ENCODE measurements at regions of chr11 and their contacts with region 1.

Region 1: DNA sequence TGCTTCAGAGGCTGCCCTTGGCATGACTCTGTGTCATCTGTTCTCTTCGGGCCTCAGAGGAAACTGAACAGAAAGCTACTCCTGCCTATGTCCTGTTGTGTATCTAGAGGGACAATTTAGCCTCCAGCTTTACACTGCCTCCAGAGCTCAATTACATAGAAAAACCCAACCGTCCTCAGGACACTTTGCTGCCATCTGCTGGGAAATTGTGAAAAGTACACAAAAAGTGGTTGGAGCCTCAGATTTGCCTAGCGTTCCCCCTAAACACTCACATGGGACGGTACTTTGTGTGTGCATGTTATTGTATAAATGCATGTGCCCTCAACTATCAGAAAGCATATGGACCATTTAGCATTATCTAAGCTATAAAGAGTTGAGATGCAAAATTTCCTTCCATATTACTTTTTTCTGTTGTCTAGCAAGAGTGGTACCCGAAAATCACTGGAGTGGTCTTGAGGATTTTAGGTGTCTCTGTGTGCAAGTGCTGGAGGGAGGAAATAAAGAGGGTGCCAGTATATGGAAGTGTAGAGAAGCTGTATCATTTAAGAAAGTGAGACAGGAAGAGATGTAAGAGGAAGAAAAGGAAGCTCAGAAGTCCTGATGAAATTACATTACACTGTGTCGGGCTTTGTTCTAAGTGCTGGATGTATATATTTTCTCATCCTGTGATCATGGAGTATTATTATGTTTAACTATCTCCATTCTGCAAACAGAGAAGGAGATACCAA is 8.7 kb upstream of the MS4A4E start:
- DNase-seq: peak; percentile 59
- ATAC-seq: peak; percentile 96
- H3K4me3 ChIP-seq: no peak overlapping the region
- H3K27ac ChIP-seq: no peak overlapping the region
- H3K4me1 ChIP-seq: no peaks in the 10 kb centered on the region
- H3K27me3 ChIP-seq: no peaks in the 10 kb centered on the region
- CTCF ChIP-seq: peak; percentile 63 to 78 (median 68)
- EP300 ChIP-seq: no peak
- POLR2A ChIP-seq: no peak
- RAD21 ChIP-seq: peak; percentile 99

Region 2: DNA sequence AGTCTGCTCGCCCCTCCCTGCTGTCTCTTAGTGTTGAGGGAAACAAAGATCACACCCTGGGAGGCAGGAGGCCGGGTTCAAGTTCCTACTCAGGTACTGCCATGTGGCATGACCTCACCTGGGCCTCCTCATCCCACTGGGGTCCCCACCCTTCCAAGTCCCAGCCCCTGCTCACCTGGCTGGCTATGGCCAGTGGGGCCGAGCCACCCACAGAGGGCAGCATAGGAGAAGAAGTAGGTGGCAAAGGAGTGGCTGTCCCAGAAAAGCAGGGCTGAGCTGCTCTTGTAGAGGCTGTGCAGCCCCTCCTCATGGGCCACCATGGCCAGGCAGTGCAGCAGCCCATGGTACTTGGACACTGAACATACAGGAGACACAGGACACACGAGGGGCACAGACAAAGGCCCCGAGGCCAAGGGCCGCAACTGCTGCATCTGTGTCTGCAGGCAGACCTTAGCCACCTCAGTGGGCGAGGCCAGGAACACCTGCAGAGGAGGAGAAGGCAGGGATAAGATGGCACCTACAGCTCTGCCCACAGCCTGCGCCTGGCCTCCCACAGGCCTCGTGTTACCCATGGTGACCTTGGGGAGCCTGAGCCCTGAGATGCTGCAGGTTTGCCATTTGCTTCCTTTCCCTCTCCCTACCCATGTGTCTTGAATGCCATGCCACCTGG is 988.3 kb before region 1 on chr11:
- CTCF ChIA-PET with region 1: no interaction called
- POLR2A ChIA-PET with region 1: no interaction called
- RAD21 ChIA-PET with region 1: no interaction called
- SMC1A ChIA-PET with region 1: no interaction called
- in situ Hi-C with region 1: no loop called
- intact Hi-C with region 1: no loop called
- DNase-seq: no peak
- ATAC-seq: peak; percentile 53
- H3K4me3 ChIP-seq: no peak overlapping the region
- H3K27ac ChIP-seq: no peak overlapping the region
- H3K4me1 ChIP-seq: peaks cover 30% of the 10 kb centered on the region
- H3K27me3 ChIP-seq: no peaks in the 10 kb centered on the region
- CTCF ChIP-seq: peak; percentile 56 to 71 (median 58)
- EP300 ChIP-seq: no peak
- POLR2A ChIP-seq: no peak
- RAD21 ChIP-seq: peak; percentile 82

Region 3: DNA sequence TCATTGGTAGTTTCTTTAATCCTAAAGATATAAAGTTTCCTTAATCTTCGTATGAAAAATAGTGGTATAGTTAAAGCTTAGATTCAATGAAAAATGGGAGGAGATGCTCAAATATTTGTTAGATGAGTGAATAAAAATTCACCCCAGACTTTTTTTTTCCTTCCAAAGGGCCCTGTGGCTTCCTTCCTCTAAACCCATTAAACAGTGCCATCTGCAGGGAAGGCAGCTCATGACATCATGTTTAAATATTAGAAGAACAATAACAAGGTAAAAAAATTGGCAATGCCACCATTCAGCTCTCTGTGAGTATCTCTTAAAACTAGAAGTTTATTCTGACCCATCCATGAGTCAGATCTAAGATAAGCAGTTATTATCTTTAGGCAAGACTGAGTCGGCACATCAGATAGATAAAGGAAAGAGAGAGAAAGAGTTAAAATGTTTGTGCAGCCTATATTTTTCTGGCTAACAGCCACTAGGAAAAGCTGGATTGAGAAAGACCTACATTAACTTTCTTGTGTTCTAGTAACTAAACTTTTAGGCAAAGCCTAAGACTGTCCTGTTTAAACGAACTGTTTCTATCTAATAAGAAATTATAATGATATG is 332.6 kb before region 1 on chr11:
- CTCF ChIA-PET with region 1: interaction called, 13 read pairs
- POLR2A ChIA-PET with region 1: no interaction called
- RAD21 ChIA-PET with region 1: interaction called, 11 read pairs
- SMC1A ChIA-PET with region 1: interaction called, 8 read pairs
- in situ Hi-C with region 1: no loop called
- intact Hi-C with region 1: no loop called
- DNase-seq: no peak
- ATAC-seq: peak; percentile 41; the same call in 1 of the 3 replicates
- H3K4me3 ChIP-seq: no peak overlapping the region
- H3K27ac ChIP-seq: no peak overlapping the region
- H3K4me1 ChIP-seq: no peaks in the 10 kb centered on the region
- H3K27me3 ChIP-seq: no peaks in the 10 kb centered on the region
- CTCF ChIP-seq: peak; percentile 33 to 45 (median 37); a peak in 4 of 6 replicates
- EP300 ChIP-seq: no peak
- POLR2A ChIP-seq: no peak
- RAD21 ChIP-seq: peak; percentile 59

Region 4: DNA sequence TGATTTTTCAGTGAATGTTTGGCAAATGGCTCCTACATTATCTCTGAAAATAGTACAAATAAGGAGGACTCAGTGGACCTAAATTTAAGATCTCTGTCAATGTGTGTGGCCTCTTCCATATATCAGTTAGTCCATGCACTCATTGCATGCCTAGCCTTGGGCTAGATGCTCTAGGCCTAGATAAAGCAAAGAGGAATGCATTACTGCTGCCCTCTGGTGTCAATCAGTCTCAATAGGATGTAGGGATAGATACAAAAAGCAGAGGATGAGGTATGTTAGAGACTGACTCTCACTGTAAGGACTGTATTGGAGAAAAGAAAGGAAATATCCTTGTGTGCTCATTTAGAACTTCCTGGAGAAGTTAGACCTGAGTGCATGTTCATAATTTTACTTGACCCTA is 121.2 kb before region 1 on chr11:
- CTCF ChIA-PET with region 1: interaction called, 9 read pairs
- POLR2A ChIA-PET with region 1: no interaction called
- RAD21 ChIA-PET with region 1: interaction called, 4 read pairs
- SMC1A ChIA-PET with region 1: interaction called, 16 read pairs
- in situ Hi-C with region 1: no loop called
- intact Hi-C with region 1: no loop called
- DNase-seq: no peak
- ATAC-seq: peak; percentile 83
- H3K4me3 ChIP-seq: no peak overlapping the region
- H3K27ac ChIP-seq: no peak overlapping the region
- H3K4me1 ChIP-seq: no peaks in the 10 kb centered on the region
- H3K27me3 ChIP-seq: no peaks in the 10 kb centered on the region
- CTCF ChIP-seq: peak; percentile 33 to 37 (median 36); a peak in 3 of 6 replicates
- EP300 ChIP-seq: no peak
- POLR2A ChIP-seq: no peak
- RAD21 ChIP-seq: peak; percentile 60

Region 5: GRCh38 chr11:60184824-60185511 is 66.7 kb before region 1 on chr11:
- CTCF ChIA-PET with region 1: interaction called, 22 read pairs
- POLR2A ChIA-PET with region 1: interaction called, 4 read pairs
- RAD21 ChIA-PET with region 1: interaction called, 9 read pairs
- SMC1A ChIA-PET with region 1: interaction called, 14 read pairs
- in situ Hi-C with region 1: no loop called
- intact Hi-C with region 1: no loop called
- DNase-seq: peak; percentile 53
- ATAC-seq: peak; percentile 86
- H3K4me3 ChIP-seq: no peak overlapping the region
- H3K27ac ChIP-seq: no peak overlapping the region
- H3K4me1 ChIP-seq: peaks cover 16% of the 10 kb centered on the region
- H3K27me3 ChIP-seq: no peaks in the 10 kb centered on the region
- CTCF ChIP-seq: no peak
- EP300 ChIP-seq: 0 out of 4 replicates have a peak, but pooled peaks of 1 of the 2 experiments have one; percentile 37
- POLR2A ChIP-seq: no peak
- RAD21 ChIP-seq: no peak

Region 6: DNA sequence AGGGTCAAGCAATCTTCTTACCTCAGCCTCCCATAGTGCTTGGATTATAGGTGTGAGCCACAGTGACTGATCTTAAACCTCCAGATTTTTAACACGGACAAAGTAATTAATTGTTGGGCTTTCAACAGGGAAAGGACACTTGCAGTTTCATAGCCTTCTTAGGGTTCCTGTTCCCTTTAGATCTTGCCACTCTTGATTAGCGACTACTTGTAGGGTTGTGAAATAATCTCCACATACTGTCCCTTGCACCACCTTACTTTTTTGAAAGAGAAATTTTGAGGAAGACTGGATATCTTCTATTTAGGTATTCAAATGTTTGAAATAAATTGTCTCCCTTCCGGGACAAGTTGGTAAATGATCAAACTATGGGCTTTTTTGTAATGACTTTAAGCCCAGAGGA is 16.3 kb before region 1 on chr11:
- CTCF ChIA-PET with region 1: interaction called, 18 read pairs
- POLR2A ChIA-PET with region 1: interaction called, 3 read pairs
- RAD21 ChIA-PET with region 1: interaction called, 8 read pairs
- SMC1A ChIA-PET with region 1: interaction called, 14 read pairs
- in situ Hi-C with region 1: no loop called
- intact Hi-C with region 1: no loop called
- DNase-seq: no peak
- ATAC-seq: no peak
- H3K4me3 ChIP-seq: no peak overlapping the region
- H3K27ac ChIP-seq: no peak overlapping the region
- H3K4me1 ChIP-seq: no peaks in the 10 kb centered on the region
- H3K27me3 ChIP-seq: no peaks in the 10 kb centered on the region
- CTCF ChIP-seq: no peak
- EP300 ChIP-seq: no peak
- POLR2A ChIP-seq: no peak
- RAD21 ChIP-seq: no peak

Region 7: DNA sequence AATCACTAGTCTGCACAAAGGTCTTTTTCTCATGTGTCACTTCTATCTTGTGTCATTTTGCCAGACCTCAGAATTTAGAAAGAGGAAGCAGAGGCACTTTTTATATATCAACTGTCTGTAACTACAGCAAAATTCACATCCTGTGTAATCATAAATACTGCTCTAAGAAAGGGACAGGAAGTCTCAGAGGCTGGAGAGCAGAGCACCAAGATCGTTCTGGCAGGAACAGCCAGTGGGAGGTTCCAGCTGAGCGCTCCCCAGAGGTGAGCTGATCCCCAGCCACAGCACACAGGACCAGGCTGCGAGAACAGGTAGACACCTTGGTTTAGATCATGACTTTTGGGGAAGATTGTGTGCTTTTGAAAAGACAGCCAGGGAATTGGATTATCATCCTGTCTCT is 126.7 kb after region 1 on chr11 and contains the start of gene MS4A7:
- CTCF ChIA-PET with region 1: no interaction called
- POLR2A ChIA-PET with region 1: no interaction called
- RAD21 ChIA-PET with region 1: no interaction called
- SMC1A ChIA-PET with region 1: no interaction called
- in situ Hi-C with region 1: no loop called
- intact Hi-C with region 1: no loop called
- DNase-seq: peak; percentile 93
- ATAC-seq: peak; percentile 94
- H3K4me3 ChIP-seq: peak within 1 kb of the TSS; percentile 45; the same call in 1 of the 2 replicates
- H3K27ac ChIP-seq: peak within 1 kb of the TSS; percentile 79
- H3K4me1 ChIP-seq: peaks cover 17% of the 10 kb centered on the region
- H3K27me3 ChIP-seq: no peaks in the 10 kb centered on the region
- CTCF ChIP-seq: no peak
- EP300 ChIP-seq: peak; percentile 27 to 49; a peak in 2 of 4 replicates
- POLR2A ChIP-seq: peak; percentile 60
- RAD21 ChIP-seq: peak; percentile 22; the same call in 1 of the 2 replicates
- polyA plus RNA-seq, gene MS4A7: 7.2 to 17.0 TPM

Region 8: GRCh38 chr11:60447846-60448245 is 196.2 kb after region 1 on chr11:
- CTCF ChIA-PET with region 1: no interaction called
- POLR2A ChIA-PET with region 1: no interaction called
- RAD21 ChIA-PET with region 1: no interaction called
- SMC1A ChIA-PET with region 1: no interaction called
- in situ Hi-C with region 1: no loop called
- intact Hi-C with region 1: no loop called
- DNase-seq: no peak
- ATAC-seq: peak; percentile 34; the same call in 2 of the 3 replicates
- H3K4me3 ChIP-seq: no peak overlapping the region
- H3K27ac ChIP-seq: no peak overlapping the region
- H3K4me1 ChIP-seq: peaks cover 16% of the 10 kb centered on the region
- H3K27me3 ChIP-seq: no peaks in the 10 kb centered on the region
- CTCF ChIP-seq: no peak
- EP300 ChIP-seq: no peak
- POLR2A ChIP-seq: no peak
- RAD21 ChIP-seq: no peak

Measured in GM12878 (cell line).